ENCODE measurements at regions of chr6 and their contacts with region 1.

Region 1: GRCh38 chr6:34196126-34196830 is 40.4 kb upstream of the HMGA1 start:
- DNase-seq: peak; percentile 70 to 98 (median 90)

Region 2: DNA sequence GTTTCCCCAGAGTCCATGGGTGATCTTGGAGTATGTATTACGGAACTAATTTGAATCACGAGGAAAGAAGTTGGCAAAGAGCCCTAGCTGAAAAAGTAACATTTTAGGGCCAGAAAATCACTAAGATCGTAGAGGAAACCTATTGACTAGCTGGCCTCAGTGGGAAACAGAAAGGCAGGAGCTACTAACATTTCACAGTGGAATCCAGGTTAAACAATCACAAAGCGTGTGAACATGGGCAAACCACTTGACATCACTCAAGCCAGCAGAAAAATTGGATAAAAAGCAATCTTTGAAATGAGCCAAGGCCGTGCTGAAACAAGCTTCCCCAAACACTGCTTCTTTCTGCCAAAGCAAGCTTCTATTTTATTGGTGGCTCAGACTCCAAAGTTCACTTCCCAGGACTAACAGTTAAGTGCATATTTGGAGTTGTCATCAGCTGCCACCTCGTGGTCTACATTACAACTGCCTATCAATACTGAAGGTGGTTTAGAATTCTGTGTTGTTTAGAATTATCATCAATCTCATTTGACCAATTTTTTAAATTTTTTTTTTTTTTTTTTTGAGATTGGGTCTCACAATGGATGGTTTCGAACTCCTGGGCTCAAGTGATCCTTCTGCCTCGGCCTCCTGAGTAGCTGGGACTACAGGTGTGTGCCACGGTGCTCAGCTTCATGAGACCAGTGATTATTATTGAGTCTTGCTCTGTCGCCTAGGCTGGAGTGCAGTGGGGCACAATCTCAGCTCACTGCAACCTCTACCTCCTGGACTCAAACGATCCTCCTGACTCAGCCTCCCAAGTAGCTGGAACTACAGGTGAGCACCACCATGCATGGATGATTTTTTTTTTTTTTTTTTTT is 219.0 kb after region 1 on chr6:
- intact Hi-C with region 1: loop called (anchors 1 kb)
- DNase-seq: peak in 5 of 10 donors; percentile 29 to 64 (median 51)

Region 3: GRCh38 chr6:34602318-34603111 is 406.2 kb after region 1 on chr6:
- intact Hi-C with region 1: loop called (anchors 10 kb)
- DNase-seq: no peak